Activated CD4-positive, alpha-beta T cell treated with anti-CD3 and anti-CD28 coated beads, Interleukin-2, amount 10 ng/mL, durations not matched to agents 24 days and 14 days (primary cell): ENCODE measurements at regions of chr9 and their contacts with region 1.

Region 1: DNA sequence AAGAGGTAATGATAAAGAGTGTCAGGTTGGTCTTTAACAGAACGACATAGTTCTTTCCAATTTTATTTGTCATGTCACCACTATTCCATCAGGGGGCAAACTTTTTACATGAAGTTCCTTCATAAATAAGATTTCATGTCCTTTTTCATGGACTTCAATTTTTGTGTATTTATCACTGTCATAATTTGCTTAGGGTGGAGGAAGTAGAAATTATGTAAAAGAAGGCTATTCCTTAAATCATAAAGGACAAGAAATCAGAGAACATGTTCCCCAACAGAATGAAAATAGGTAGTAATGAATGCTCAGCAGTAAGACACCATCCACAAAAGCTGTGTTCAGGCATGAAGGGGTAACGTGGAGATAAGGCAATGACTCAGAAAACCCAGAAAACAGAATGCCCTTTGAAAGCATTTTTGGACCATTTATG is 72.7 kb downstream of the ZFAND5 start:
- DNase-seq: no peak
- H3K4me3 Mint-ChIP-seq: no peak overlapping the region
- H3K27ac Mint-ChIP-seq: no peak overlapping the region
- H3K4me1 Mint-ChIP-seq: peaks cover 4% of the 10 kb centered on the region
- H3K27me3 Mint-ChIP-seq: peaks cover 31% of the 10 kb centered on the region

Region 2: GRCh38 chr9:72228282-72228681 is 64.0 kb before region 1 on chr9:
- intact Hi-C with region 1: no loop called
- DNase-seq: no peak
- H3K4me3 Mint-ChIP-seq: no peak overlapping the region
- H3K27ac Mint-ChIP-seq: no peak overlapping the region
- H3K4me1 Mint-ChIP-seq: no peaks in the 10 kb centered on the region
- H3K27me3 Mint-ChIP-seq: peaks cover 7% of the 10 kb centered on the region

Region 3: GRCh38 chr9:72351538-72352453 is 59.5 kb after region 1 on chr9:
- intact Hi-C with region 1: no loop called
- DNase-seq: no peak
- H3K4me3 Mint-ChIP-seq: no peak overlapping the region
- H3K27ac Mint-ChIP-seq: no peak overlapping the region
- H3K4me1 Mint-ChIP-seq: peaks cover 20% of the 10 kb centered on the region
- H3K27me3 Mint-ChIP-seq: no peaks in the 10 kb centered on the region

Region 4: GRCh38 chr9:72592502-72593403 is 300.5 kb after region 1 on chr9:
- intact Hi-C with region 1: loop called (anchors 1 kb)
- DNase-seq: peak; percentile 79
- H3K4me3 Mint-ChIP-seq: no peak overlapping the region
- H3K27ac Mint-ChIP-seq: no peak overlapping the region
- H3K4me1 Mint-ChIP-seq: peaks cover 45% of the 10 kb centered on the region
- H3K27me3 Mint-ChIP-seq: peaks cover 8% of the 10 kb centered on the region